Activated CD4-positive, alpha-beta T cell treated with anti-CD3 and anti-CD28 coated beads for 36 hours (primary cell): ENCODE measurements at regions of chrX and their contacts with region 1.

Region 1: DNA sequence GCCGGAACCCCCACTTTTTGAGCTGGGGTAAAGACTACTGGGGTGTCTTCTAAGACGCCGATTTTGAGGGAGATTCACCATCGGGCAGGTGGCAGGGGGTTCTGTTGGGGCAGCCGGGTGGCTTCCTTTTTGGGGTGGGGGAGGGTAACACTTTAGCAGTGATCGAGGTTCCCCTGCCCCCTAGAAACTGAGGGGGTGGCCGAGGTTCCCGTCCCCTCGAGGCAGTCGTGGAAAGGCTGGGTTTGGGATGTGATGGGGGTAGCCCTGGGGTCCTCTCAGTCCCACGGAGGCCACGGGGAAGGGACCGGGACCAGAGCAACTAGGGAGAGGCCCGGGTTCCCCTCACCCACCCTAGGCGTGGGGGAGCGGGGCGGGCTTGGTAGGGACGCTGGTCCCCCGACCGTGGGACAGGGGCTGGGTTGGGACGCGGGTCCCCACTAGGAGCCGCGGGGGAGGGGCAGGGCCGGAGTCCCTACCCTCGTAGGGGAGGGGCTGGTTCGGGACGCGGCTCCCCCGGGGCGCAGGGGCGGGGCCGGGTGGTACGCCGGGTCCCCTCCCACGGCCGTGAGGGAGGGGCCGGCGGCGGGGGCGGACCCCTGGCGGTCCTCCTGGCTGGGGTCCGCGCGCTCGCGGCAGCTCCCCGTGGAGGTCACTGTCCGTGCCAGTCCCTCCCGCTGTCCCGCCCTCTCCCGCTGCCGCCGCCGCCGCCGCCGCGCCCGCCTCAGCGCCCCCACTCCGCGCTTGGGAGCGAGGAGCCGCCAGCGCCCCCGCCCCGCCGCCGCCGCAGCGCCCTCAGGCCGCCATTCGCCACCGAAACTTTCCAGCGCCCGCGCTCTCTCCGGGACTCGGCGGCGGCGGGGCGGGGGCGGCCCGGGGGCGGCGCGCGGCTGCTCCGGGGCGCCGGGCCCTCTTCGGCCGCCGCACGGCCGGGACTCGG is at the start of gene TBL1X:
- DNase-seq: peak; percentile 66
- ATAC-seq: peak; percentile 21
- H3K4me3 Mint-ChIP-seq: peak within 1 kb of the TSS; percentile 74
- H3K27ac Mint-ChIP-seq: peak within 1 kb of the TSS; percentile 88
- H3K4me1 Mint-ChIP-seq: peaks cover 40% of the 10 kb centered on the region
- H3K27me3 Mint-ChIP-seq: no peaks in the 10 kb centered on the region
- total RNA-seq, gene TBL1X: 21.2 to 24.2 TPM

Region 2: DNA sequence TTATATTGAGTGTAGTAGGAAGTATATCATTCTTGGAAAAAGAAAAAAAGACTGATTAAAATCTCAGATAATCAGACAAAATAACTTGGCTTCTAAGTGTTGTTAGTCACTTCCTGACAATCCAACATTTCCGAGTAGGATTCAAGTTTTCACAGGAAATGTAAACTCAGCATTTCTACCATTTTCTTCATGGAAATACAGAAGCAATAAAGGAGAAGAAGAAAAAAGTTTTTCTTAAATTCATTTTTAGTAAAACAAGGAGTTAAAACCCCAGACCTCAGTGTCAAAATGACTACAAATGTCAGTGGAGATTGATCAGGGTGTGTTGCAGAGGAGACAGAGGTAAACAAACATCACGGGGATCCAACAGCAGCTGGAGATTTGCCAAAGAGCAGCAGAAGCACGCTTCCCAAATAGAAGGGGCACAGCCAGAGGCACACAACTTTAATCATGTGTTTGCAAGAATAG is 301.5 kb before region 1 on chrX:
- CTCF ChIA-PET with region 1: no interaction called
- POLR2A ChIA-PET with region 1: no interaction called
- intact Hi-C with region 1: loop called in 1 of 2 experiments (anchors 10 kb)
- DNase-seq: no peak
- ATAC-seq: no peak
- H3K4me3 Mint-ChIP-seq: no peak overlapping the region
- H3K27ac Mint-ChIP-seq: no peak overlapping the region
- H3K4me1 Mint-ChIP-seq: peaks cover 42% of the 10 kb centered on the region
- H3K27me3 Mint-ChIP-seq: peaks cover 2% of the 10 kb centered on the region

Region 3: DNA sequence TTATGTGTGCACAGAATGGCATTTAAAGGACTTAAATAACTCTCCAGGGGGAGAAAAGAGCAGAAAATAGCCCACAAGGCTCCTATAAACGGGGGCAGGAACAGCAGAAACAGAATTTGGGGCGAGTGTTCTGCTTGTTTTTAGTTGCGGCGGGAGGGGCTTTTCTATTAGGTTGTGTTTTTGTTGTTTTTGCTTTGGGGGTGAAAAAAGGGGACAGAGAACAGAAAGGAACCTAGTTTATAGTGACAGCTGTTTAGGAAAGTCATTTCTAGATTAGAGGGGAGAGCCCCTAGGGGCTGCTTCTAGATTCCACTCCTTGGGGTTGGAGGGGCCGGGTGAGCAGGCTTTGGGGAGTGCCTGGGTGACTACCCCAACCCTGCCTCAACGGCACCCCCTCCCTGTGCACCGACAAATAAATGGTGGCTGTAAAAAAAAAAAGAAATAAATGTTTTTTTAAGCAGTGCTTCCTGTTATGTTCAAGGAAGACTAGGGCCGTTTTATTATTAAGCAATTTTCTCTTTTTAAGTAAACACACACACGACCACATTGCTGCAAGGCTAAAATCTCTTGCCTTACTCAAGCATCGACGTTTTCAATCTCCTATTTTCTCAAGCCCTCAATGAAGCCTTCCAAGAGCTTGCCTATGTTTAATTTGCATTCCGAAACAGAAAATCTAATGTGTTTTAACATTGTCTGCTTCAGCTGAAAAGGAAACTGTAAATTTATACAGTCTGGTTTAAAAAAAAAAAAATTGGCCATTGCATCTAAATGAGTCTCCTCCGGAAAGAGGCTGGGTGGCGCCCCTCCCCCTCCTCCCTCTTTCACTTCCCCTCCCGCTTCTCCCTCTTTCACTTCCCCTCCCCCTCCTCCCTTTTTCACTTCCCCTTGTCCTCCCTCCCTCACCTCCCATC is 123.2 kb before region 1 on chrX:
- CTCF ChIA-PET with region 1: interaction called, 3 read pairs
- POLR2A ChIA-PET with region 1: interaction called, 4 read pairs
- intact Hi-C with region 1: loop called (anchors 1 kb)
- DNase-seq: peak; percentile 80
- ATAC-seq: peak; percentile 86
- H3K4me3 Mint-ChIP-seq: peak overlapping the region; percentile 48
- H3K27ac Mint-ChIP-seq: peak overlapping the region; percentile 76
- H3K4me1 Mint-ChIP-seq: peaks cover 33% of the 10 kb centered on the region
- H3K27me3 Mint-ChIP-seq: no peaks in the 10 kb centered on the region

Region 4: DNA sequence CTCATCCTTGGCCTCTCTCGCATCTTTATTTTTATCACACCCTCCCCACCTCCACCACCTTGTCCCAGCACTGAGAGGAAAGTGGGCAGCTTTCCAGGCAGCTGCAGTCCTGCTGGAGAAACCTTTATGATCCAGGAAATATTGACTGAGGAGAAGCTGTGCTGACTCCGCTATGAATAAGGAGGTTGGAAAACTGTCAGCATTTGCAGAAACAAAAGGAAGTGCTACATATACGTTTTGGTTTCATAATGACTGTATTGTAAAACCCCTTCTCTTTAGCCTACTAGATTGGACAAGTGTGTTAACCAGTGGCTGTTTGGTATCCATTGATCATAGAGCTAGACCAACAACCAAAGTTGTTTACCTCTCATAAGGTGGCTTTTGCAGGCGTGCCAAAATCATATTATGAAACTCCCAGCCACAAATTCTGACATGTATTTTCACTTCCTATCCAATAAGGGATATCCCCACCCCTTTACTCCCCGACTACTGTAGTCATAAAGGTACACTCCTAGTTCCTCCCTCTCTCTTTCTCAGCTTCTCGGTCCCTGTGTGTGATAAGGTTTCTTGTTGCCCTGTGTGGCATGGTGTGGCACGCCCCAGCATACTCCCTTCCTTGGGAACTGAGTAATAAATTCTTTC is 212.5 kb after region 1 on chrX:
- CTCF ChIA-PET with region 1: no interaction called
- POLR2A ChIA-PET with region 1: interaction called, 3 read pairs
- intact Hi-C with region 1: loop called in 1 of 2 experiments (anchors 2 kb)
- DNase-seq: peak; percentile 34
- ATAC-seq: peak; percentile 99
- H3K4me3 Mint-ChIP-seq: no peak overlapping the region
- H3K27ac Mint-ChIP-seq: peak overlapping the region; percentile 19
- H3K4me1 Mint-ChIP-seq: peaks cover 22% of the 10 kb centered on the region
- H3K27me3 Mint-ChIP-seq: no peaks in the 10 kb centered on the region

Region 5: GRCh38 chrX:10014462-10015356 is 550.0 kb after region 1 on chrX:
- CTCF ChIA-PET with region 1: no interaction called
- POLR2A ChIA-PET with region 1: no interaction called
- intact Hi-C with region 1: loop called in 1 of 2 experiments (anchors 5 kb)
- DNase-seq: peak; percentile 83
- ATAC-seq: peak; percentile 89
- H3K4me3 Mint-ChIP-seq: peak overlapping the region; percentile 60
- H3K27ac Mint-ChIP-seq: peak overlapping the region; percentile 58
- H3K4me1 Mint-ChIP-seq: peaks cover 37% of the 10 kb centered on the region
- H3K27me3 Mint-ChIP-seq: peaks cover 6% of the 10 kb centered on the region